ENCODE measurements at regions of chr9 and their contacts with region 1.

Region 1: DNA sequence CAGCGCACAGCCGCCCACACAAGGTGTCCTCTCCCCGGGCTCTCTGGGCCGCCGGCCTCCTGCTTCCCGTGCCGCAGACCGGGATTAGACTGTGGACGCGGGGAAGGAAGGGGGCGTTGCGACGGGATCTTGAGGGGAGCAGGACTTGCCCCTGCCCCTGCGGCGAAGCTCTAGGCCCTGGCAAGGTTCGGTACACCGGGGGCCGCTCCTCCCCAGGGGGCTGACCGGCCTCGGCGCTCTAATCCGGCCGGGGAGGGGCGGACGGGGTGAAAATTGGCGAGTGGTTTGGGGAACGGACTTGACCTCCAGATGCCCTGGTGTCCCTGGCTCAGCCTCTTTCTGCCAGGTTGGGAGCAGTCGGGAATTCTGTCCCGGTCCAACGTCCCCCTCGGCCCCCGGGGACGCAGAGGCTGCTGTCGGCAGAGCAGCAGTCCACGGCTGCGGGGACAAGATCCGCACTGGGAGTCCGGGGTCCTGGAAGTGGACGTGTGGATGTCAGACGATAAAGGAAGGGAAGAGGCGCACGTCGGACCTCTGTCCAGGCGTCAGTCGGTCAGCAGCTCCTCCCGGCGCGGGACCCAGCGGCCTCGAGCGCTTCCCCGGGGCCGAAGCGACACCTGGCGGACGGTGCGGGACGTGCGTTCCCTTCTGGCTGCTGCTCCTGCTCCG is 1.9 kb upstream of the CNTFR start:
- DNase-seq: peak; percentile 81 to 92 (median 91)
- ATAC-seq: peak; percentile 91
- H3K4me3 ChIP-seq: no peak overlapping the region
- H3K4me1 ChIP-seq: peaks cover 29% of the 10 kb centered on the region
- CTCF ChIP-seq: peak; percentile 79

Region 2: GRCh38 chr9:34403554-34404380 is 187.6 kb before region 1 on chr9:
- intact Hi-C with region 1: loop called in 1 of 2 experiments (anchors 10 kb)
- DNase-seq: peak in 2 of 3 donors; percentile 75 to 81
- ATAC-seq: peak; percentile 80
- H3K4me3 ChIP-seq: no peak overlapping the region
- H3K4me1 ChIP-seq: no peaks in the 10 kb centered on the region
- CTCF ChIP-seq: peak; percentile 88

Region 3: GRCh38 chr9:34546834-34547827 is 44.3 kb before region 1 on chr9:
- intact Hi-C with region 1: loop called (anchors 5 to 10 kb)
- DNase-seq: peak in 2 of 3 donors; percentile 66 to 80
- ATAC-seq: peak; percentile 69
- H3K4me3 ChIP-seq: no peak overlapping the region
- H3K4me1 ChIP-seq: no peaks in the 10 kb centered on the region
- CTCF ChIP-seq: peak; percentile 40

Measured in mucosa of descending colon (tissue), 3 donors.